ENCODE measurements at regions of chr7 and their contacts with region 1.

Region 1: GRCh38 chr7:98409843-98410242 is 9.0 kb upstream of the BAIAP2L1 start:
- DNase-seq: no peak
- ATAC-seq: no peak
- H3K4me3 Mint-ChIP-seq: no peak overlapping the region
- H3K27ac Mint-ChIP-seq: no peak overlapping the region
- H3K4me1 Mint-ChIP-seq: no peaks in the 10 kb centered on the region
- H3K27me3 Mint-ChIP-seq: peaks cover 6% of the 10 kb centered on the region

Region 2: GRCh38 chr7:98420966-98421612 is 11.2 kb after region 1 on chr7:
- CTCF ChIA-PET with region 1: interaction called, 13 read pairs
- POLR2A ChIA-PET with region 1: no interaction called
- intact Hi-C with region 1: no loop called
- DNase-seq: peak; percentile 80
- ATAC-seq: peak; percentile 60
- H3K4me3 Mint-ChIP-seq: no peak overlapping the region
- H3K27ac Mint-ChIP-seq: no peak overlapping the region
- H3K4me1 Mint-ChIP-seq: no peaks in the 10 kb centered on the region
- H3K27me3 Mint-ChIP-seq: peaks cover 8% of the 10 kb centered on the region